Cardiac septum (tissue), 1 donor: ENCODE measurements at regions of chr2 and their contacts with region 1.

Region 1: DNA sequence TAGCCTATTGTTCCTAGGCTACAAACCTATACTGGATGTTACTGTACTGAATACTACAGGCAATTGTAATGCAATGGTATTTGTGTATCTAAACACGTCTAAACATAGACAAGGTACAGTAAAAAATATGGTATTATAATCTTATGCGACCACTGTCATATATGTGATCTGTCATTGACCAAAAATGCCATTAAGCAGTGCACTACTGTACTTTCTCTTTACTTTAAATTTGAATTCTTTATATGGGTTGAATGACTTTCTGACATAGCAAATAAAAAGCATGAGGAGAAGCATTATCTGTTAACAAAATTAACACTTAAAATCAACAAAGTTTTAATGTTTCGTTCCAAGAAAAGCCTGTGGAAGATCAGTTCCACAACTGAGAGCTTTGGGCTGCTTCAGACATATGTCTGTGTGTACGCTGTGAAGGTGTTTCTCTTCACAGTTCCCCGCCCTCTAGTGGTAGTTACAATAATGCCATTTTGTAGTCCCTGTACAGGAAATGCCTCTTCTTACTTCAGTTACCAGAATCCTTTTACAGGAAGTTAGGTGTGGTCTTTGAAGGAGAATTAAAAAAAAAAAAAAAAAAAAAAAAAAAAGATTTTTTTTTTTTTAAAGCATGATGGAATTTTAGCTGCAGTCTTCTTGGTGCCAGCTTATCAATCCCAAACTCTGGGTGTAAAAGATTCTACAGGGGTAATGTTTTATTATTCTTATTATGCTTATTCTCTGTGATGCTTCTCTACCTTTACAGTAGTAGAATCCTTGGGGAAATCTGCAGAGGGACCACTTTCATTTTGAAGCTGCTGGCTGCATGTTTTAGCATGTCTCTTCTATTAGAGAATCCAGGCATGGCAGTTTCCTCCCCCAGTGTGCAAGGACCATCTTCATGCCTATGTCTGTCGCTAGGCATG is 54.5 kb downstream of the SCN2A start:
- DNase-seq: no peak

Region 2: DNA sequence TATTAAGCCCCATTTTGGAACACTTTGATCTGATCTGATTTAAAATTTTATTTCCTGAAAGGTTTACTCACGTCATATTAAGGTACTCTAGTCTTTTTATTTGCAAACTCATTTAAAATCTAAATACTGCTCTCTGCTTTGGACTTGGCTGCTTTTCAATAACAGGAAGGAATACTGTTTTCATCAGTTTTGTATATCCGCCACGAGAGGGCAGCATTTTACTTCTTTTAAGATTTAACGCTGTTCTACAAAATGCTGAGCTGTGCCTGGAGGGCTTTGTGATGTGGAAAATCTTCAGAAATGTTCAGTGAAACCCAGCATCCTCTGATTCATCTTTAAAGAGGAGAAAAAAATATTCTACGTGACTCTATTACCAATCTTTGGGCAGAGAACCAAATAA is 300.9 kb before region 1 on chr2:
- intact Hi-C with region 1: loop called (anchors 10 kb)
- DNase-seq: no peak

Region 3: DNA sequence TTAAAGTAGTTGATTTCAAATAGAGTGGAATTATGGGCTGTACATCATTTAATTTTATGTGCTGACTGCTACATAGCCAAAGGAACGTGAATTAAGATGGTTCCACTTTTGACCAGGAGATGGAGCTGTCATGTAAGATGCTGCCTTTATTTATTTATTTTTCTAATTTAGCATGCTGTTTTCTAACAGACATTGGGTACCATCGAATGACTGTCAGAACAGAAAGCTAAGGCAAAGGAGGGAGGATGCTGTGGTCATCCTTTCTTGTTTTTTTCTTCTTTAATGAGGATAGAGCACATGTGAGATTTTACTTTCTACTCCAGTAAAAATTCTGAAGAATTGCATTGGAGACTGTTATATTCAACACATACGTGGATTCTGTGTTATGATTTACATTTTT is 54.5 kb before region 1 on chr2 and contains the start of gene SCN2A:
- intact Hi-C with region 1: loop called (anchors 2 kb)
- DNase-seq: no peak
- total RNA-seq, gene SCN2A: 0.13 TPM

Region 4: DNA sequence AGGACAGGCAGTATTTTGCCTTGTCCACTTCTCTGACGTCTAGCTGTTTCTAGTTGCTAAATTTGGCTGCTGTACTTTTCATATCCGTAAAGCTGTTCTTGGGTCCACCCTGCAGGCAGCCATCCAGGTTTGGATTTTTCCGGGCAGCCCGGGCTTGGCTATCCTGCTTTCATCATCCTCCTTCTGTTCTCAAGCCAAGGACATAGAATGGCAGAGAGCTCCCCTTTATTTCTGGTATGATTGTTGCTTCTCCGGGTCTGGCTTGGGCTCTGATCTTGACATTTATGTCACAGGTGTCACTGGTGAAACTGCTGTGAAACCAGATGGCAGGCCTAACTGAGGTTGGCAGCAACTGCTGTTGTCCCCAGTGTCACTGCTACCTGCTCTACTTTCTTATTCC is 19.0 kb before region 1 on chr2:
- intact Hi-C with region 1: loop called (anchors 2 kb)
- DNase-seq: peak; percentile 86

Region 5: DNA sequence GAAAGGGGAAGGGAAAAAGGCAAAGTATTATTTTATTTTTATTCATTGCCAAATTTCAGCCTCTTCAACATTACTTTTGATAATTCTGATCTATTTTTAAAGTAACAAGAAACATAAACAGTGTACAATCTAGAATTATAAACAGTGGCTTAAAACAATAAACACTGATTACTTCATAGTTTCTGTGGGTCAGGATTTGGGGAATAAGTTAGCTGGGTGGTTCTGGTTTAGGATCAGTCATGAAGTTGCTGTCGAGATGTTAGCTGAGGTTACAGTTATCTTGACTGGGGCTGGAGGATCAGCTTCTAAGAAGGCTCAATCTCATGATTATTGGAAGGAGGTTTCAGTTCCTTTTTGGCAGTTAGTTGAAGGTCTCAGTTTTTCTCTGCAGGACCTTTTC is 54.7 kb after region 1 on chr2:
- intact Hi-C with region 1: no loop called
- DNase-seq: no peak